T-cell (primary cell): ENCODE measurements at regions of chr19 and their contacts with region 1.

Region 1: DNA sequence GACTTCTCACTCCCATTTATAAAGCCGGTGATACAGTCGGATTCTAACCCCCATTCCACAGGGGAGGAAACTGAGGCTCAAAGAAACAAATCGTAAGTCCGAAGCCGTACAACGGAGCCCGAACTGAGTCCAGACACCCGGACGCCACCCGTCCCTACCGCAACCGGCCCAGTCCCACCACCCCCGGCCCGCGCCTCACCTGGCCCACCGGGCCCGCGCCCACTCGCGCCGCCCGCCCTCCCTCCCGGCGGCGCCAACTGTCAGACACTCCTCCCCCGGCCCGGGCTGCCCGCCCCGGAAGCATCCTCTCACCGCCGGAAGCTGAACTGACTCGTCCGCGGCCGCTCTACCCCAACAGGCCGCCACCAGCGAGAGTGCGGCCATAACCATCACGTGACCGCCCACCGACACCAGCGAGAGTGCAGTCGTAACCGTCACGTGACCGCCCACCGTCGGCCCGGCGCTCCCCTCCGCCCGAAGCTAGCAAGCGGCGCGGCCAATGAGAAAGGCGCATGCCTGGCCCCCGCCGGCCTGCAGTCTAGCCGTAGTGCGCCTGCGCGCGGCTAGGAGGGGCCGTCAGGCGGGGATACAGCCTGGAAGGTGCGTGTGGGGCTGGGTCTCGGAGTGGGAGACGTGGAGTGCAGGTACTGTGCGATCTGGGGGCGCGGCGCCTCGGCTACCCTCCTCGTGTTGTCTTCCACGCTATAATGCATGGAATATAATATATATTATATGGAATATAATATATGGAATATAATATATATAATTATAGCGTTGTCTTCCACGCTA is at the starts of genes C19orf47 and PLD3:
- DNase-seq: peak; percentile 91 to 99 (median 98)
- ATAC-seq: peak; percentile 91 to 98 (median 95)
- H3K4me3 ChIP-seq: peak within 1 kb of the TSS; percentile 68 to 72
- H3K4me3 Mint-ChIP-seq: peak within 1 kb of the TSS; percentile 82 to 90 (median 85)
- H3K27ac ChIP-seq: peak within 1 kb of the TSS; percentile 74
- H3K27ac Mint-ChIP-seq: peak within 1 kb of the TSS; percentile 81 to 88
- H3K4me1 ChIP-seq: peaks cover 6 to 19% of the 10 kb centered on the region in 2 experiments
- H3K4me1 Mint-ChIP-seq: peaks cover 30 to 37% (median 31%) of the 10 kb centered on the region in 3 donors
- H3K27me3 ChIP-seq: no peaks in the 10 kb centered on the region
- H3K27me3 Mint-ChIP-seq: no peaks in the 10 kb centered on the region
- total RNA-seq, gene C19orf47: 12.4 to 14.8 (median 14.5) TPM
- total RNA-seq, gene PLD3: 71.0 to 120 (median 118) TPM

Region 2: DNA sequence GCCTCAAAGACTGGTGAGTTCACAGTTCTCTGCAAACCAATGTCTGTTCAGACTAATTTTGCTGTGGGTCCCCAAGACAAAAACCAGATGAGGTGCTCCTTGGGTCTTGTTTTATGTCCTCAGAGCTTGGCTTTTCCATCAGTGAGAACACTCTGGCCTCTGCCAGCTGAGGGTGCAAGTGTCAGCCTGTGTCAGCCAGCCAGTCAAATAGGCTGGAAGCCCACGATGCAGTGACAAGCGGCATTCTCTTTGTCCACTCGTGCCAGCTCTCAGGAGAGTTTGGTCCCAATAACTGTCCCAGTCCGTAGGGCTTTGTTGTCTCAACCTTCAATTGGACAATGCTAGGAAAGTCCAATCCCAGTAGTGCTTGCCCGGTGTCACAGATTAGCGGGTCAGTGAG is 53.8 kb before region 1 on chr19:
- CTCF ChIA-PET with region 1: no interaction called
- POLR2A ChIA-PET with region 1: interaction called in 1 of 2 experiments, 24 read pairs
- DNase-seq: no peak
- ATAC-seq: no peak
- H3K4me3 ChIP-seq: no peak overlapping the region
- H3K4me3 Mint-ChIP-seq: no peak overlapping the region
- H3K27ac ChIP-seq: no peak overlapping the region
- H3K27ac Mint-ChIP-seq: no peak overlapping the region
- H3K4me1 ChIP-seq: no peaks in the 10 kb centered on the region
- H3K4me1 Mint-ChIP-seq: no peaks in the 10 kb centered on the region
- H3K27me3 ChIP-seq: no peaks in the 10 kb centered on the region
- H3K27me3 Mint-ChIP-seq: no peaks in the 10 kb centered on the region